Mammary epithelial cell (primary cell): ENCODE measurements at regions of chr3 and their contacts with region 1.

Region 1: DNA sequence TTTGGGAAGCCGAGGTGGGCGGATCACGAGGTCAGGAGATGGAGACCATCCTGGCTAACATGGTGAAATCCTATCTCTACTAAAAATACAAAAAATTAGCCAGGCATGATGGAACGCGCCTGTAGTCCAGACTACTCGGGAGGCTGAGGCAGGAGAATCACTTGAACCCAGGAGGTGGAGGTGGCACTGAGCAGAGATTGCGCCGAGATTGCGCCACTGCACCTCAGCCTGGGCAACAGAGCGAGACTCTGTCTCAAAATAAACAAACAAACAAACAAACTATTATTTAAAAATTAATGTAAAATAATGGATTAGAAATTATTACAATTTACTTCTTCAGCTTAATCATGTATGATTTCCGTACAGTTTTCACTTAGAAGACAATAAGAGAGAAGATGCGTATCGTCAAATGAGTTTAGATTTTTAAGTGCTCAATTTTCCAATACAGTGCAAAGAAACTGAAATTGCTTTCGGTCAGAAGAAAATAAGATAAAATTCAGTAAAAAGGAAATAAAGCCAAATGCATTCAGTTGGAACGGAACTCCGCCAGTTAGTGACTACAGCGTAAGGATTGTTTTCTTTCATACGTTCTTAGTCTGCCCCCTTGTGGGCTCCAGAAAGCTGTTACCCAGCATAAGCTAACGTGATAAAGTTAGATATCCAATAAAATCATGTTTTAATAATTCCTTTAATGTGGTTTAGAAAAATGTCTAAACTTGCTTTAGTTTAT is 24.8 kb downstream of the AADAC start:
- DNase-seq: peak; percentile 55
- H3K4me3 ChIP-seq: no peak overlapping the region
- H3K27ac ChIP-seq: no peak overlapping the region
- H3K4me1 ChIP-seq: peaks cover 18% of the 10 kb centered on the region
- H3K27me3 ChIP-seq: no peaks in the 10 kb centered on the region
- CTCF ChIP-seq: peak; percentile 77 to 78

Region 2: DNA sequence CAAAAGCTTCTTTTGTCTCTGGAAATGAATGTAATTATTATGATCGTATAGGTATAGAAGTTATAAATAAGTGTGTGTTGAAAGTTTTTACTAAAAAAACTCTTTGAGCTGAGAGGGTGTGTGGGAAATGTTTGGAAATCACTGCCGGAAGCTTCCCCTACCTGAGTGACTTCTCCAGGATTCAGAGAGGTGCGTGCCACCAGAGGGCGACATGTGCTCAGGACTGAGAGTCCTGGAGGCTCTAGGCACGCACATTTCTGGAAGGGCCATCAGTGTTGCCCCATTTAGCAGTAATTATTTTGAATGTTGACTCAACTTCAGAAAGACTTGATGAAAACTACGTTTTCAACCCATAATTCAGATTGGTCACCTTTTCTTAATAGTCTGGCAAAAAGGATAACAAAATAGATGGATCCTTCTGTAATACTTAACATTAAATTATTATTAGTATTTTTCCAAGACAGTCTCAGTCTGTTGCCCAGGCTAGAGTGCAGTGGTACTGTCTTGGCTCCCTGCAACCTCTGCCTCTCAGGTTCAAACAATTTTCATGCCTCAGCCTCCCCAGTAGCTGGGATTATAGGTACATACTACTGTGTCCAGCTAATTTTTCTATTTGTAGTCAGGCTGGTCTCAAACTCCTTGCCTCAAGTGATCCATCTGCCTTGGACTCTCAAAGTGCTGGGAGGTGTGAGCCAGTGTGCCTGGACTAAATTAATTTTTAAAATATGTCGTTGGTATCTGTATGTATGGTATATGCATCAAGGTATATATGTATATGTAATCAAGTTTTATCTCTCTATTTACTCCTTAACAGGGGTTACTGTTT is 670.3 kb before region 1 on chr3:
- CTCF ChIA-PET with region 1: no interaction called
- dilution Hi-C with region 1: no loop called
- in situ Hi-C with region 1: no loop called
- intact Hi-C with region 1: loop called (anchors 5 kb)
- DNase-seq: peak; percentile 48
- H3K4me3 ChIP-seq: no peak overlapping the region
- H3K27ac ChIP-seq: no peak overlapping the region
- H3K4me1 ChIP-seq: peaks cover 2% of the 10 kb centered on the region
- H3K27me3 ChIP-seq: no peaks in the 10 kb centered on the region
- CTCF ChIP-seq: peak; percentile 81 to 94

Region 3: DNA sequence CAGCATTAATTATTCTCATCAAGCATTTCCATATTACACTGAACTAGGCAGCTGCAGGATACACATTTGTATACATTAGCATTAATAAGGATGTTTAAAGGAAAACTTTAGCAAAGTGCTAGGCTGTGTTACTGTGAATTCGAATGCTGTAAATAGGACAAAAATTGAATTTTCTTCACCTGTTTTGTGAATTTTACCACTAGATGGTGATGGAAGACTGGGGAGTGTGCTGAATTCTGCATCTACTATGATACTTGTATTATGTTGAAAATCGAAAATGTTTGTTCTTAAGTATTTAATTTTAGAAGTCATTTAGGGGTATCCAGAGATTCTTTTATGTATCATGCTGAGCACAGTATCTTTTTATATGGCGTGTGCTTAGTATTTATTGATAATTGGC is 548.1 kb before region 1 on chr3:
- CTCF ChIA-PET with region 1: no interaction called
- dilution Hi-C with region 1: no loop called
- in situ Hi-C with region 1: no loop called
- intact Hi-C with region 1: loop called (anchors 2 kb)
- DNase-seq: no peak
- H3K4me3 ChIP-seq: no peak overlapping the region
- H3K27ac ChIP-seq: no peak overlapping the region
- H3K4me1 ChIP-seq: no peaks in the 10 kb centered on the region
- H3K27me3 ChIP-seq: no peaks in the 10 kb centered on the region
- CTCF ChIP-seq: peak; percentile 48 to 57

Region 4: GRCh38 chr3:151316267-151316991 is 522.3 kb before region 1 on chr3 and contains the start of gene GPR87:
- CTCF ChIA-PET with region 1: interaction called, 16 read pairs
- dilution Hi-C with region 1: no loop called
- in situ Hi-C with region 1: loop called in 1 of 2 experiments (anchors 25 kb)
- intact Hi-C with region 1: no loop called
- DNase-seq: peak; percentile 95
- H3K4me3 ChIP-seq: peak within 1 kb of the TSS; percentile 63 to 91 (median 89)
- H3K27ac ChIP-seq: peak within 1 kb of the TSS; percentile 99
- H3K4me1 ChIP-seq: peaks cover 64% of the 10 kb centered on the region
- H3K27me3 ChIP-seq: no peaks in the 10 kb centered on the region
- CTCF ChIP-seq: no peak
- total RNA-seq, gene GPR87: 66.1 to 78.7 TPM

Region 5: GRCh38 chr3:151468284-151468917 is 370.3 kb before region 1 on chr3:
- CTCF ChIA-PET with region 1: no interaction called
- dilution Hi-C with region 1: no loop called
- in situ Hi-C with region 1: no loop called
- intact Hi-C with region 1: loop called (anchors 1 kb)
- DNase-seq: peak; percentile 35
- H3K4me3 ChIP-seq: no peak overlapping the region
- H3K27ac ChIP-seq: no peak overlapping the region
- H3K4me1 ChIP-seq: no peaks in the 10 kb centered on the region
- H3K27me3 ChIP-seq: peaks cover 4% of the 10 kb centered on the region
- CTCF ChIP-seq: peak; percentile 91

Region 6: DNA sequence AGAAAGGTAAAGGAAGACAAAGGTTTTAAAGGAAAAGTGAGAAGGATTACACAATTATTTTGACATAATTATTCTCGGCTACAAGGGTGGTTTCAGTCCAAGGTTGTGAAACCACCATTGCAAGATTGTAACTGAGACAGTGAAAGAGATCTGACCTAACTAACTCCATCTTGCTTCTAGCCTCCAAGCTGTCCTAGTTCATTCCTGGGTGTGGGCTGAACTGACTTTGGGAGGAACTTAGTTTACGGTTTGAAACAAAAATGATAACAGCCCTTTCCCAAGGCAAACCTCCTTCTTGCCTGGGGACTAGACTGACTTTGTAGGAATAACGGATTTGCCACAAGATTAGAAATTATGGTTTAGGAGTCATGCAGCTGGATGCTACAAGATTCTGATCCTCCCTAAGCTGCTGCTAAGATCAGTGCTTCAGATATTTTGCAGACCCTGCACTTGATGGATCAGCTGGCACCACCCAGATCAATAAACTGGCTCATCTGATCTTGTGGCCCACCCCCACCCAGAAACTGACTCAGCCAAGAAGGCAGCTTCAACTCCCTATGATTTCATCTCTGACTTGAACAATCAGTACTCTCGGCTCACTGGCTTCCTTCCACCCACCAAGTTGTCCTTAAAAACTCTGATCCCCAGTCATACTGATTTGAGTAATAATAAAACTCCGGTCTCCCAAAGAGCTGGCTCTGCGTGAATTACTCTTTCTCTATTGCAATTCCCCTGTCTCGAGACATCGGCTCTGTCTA is 162.7 kb before region 1 on chr3:
- CTCF ChIA-PET with region 1: no interaction called
- dilution Hi-C with region 1: no loop called
- in situ Hi-C with region 1: no loop called
- intact Hi-C with region 1: no loop called
- DNase-seq: no peak
- H3K4me3 ChIP-seq: no peak overlapping the region
- H3K27ac ChIP-seq: no peak overlapping the region
- H3K4me1 ChIP-seq: no peaks in the 10 kb centered on the region
- H3K27me3 ChIP-seq: no peaks in the 10 kb centered on the region
- CTCF ChIP-seq: no peak

Region 7: GRCh38 chr3:151816091-151816604 is 22.6 kb before region 1 on chr3:
- CTCF ChIA-PET with region 1: no interaction called
- dilution Hi-C with region 1: no loop called
- in situ Hi-C with region 1: no loop called
- intact Hi-C with region 1: loop called (anchors 1 kb)
- DNase-seq: peak; percentile 82
- H3K4me3 ChIP-seq: no peak overlapping the region
- H3K27ac ChIP-seq: no peak overlapping the region
- H3K4me1 ChIP-seq: peaks cover 18% of the 10 kb centered on the region
- H3K27me3 ChIP-seq: no peaks in the 10 kb centered on the region
- CTCF ChIP-seq: no peak

Region 8: GRCh38 chr3:152021916-152022461 is 183.2 kb after region 1 on chr3:
- CTCF ChIA-PET with region 1: no interaction called
- dilution Hi-C with region 1: no loop called
- in situ Hi-C with region 1: no loop called
- intact Hi-C with region 1: no loop called
- DNase-seq: peak; percentile 97
- H3K4me3 ChIP-seq: no peak overlapping the region
- H3K27ac ChIP-seq: peak overlapping the region; percentile 72
- H3K4me1 ChIP-seq: peaks cover 38% of the 10 kb centered on the region
- H3K27me3 ChIP-seq: no peaks in the 10 kb centered on the region
- CTCF ChIP-seq: no peak